Activated CD4-positive, alpha-beta T cell treated with anti-CD3 and anti-CD28 coated beads, Interleukin-2, amount 10 ng/mL, durations not matched to agents 7 days and 5 days (primary cell): ENCODE measurements at regions of chr17 and their contacts with region 1.

Region 1: GRCh38 chr17:63697341-63698286 is 2.3 kb downstream of the LIMD2 start:
- DNase-seq: peak; percentile 87
- H3K4me3 Mint-ChIP-seq: peak overlapping the region; percentile 97
- H3K27ac Mint-ChIP-seq: peak overlapping the region; percentile 98
- H3K4me1 Mint-ChIP-seq: peaks cover 43% of the 10 kb centered on the region
- H3K27me3 Mint-ChIP-seq: no peaks in the 10 kb centered on the region

Region 2: DNA sequence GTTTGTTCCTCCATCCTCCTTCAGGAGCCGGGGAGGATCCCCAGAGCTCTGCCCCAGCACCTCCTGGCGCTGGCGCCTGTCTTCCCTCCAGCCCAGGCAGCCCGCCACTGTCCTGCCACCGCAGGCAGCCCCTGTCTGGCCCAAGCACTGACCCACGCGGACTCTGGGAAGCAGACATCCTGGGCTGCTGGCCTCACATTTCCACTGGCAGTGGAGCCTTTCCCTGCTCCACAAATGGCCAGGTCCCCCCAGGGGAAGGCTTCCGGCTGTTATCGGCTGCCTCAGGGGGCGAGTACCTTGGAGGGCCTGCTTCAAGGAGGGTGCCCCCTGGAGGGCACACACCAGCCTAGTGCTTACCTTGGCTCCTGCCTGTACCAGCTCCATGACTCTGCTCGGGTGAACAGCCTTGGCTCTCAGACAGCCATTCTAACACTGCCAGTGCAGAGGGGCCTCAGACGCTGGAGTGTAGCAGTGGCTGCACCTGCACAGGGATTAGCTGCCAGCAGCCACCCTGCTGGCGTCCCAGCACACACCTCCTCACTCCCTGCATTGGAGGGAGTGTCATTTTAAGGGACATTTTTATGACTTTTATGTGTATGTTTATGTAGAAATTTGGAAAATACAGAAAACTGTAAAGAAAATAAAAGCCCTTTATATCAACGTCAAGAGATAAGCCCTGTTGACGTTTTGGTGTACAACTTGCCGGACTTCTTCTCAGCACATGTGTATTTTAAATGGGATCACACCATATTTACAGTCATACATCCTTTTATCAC is 199.7 kb before region 1 on chr17:
- CTCF ChIA-PET with region 1: no interaction called
- POLR2A ChIA-PET with region 1: no interaction called
- DNase-seq: no peak
- H3K4me3 Mint-ChIP-seq: no peak overlapping the region
- H3K27ac Mint-ChIP-seq: no peak overlapping the region
- H3K4me1 Mint-ChIP-seq: no peaks in the 10 kb centered on the region
- H3K27me3 Mint-ChIP-seq: peaks cover 9% of the 10 kb centered on the region

Region 3: GRCh38 chr17:63653050-63653449 is 44.6 kb before region 1 on chr17:
- CTCF ChIA-PET with region 1: no interaction called
- POLR2A ChIA-PET with region 1: no interaction called
- DNase-seq: no peak
- H3K4me3 Mint-ChIP-seq: no peak overlapping the region
- H3K27ac Mint-ChIP-seq: no peak overlapping the region
- H3K4me1 Mint-ChIP-seq: peaks cover 9% of the 10 kb centered on the region
- H3K27me3 Mint-ChIP-seq: no peaks in the 10 kb centered on the region

Region 4: DNA sequence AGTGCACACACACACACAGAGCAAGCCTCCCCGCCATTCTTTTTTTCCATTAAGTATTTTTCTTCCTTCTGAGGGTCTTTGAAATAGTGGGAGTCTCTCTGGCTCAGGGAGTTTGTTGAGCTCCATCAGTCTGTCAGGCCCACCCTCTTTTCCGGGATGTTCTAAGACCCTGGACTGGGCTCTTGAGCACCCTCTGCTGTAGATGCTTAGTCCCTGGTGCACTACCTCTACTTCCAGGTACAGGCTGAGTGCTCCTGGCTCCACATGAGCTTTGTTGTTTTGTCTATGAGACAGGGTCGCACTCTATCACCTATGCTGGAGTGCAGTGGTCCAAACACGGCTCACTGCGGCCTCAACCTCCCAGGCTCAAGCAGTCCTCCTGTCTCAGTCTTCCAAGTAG is 18.4 kb before region 1 on chr17:
- CTCF ChIA-PET with region 1: interaction called, 10 read pairs
- POLR2A ChIA-PET with region 1: no interaction called
- DNase-seq: no peak
- H3K4me3 Mint-ChIP-seq: no peak overlapping the region
- H3K27ac Mint-ChIP-seq: no peak overlapping the region
- H3K4me1 Mint-ChIP-seq: peaks cover 3% of the 10 kb centered on the region
- H3K27me3 Mint-ChIP-seq: no peaks in the 10 kb centered on the region

Region 5: DNA sequence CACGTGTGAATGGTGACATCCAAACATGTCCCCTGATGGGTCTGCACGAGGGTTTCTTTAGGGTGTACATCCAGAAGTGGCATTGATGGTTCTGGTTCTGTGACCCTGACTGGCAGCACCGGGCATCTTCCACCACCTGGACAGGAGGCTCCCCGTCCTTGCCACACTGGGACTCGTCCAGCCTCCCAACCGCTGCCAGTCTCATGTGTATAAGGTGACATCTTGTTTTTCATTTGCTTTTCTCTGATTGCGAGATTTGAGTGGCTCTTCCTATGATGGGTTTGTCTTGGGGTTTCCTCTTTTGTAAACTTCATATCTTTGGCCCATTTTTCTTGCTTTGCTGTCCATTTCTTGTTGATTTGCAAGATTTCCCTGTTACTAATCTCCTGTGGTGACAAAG is 11.5 kb after region 1 on chr17:
- CTCF ChIA-PET with region 1: interaction called, 21 read pairs
- POLR2A ChIA-PET with region 1: interaction called, 3 read pairs
- DNase-seq: no peak
- H3K4me3 Mint-ChIP-seq: no peak overlapping the region
- H3K27ac Mint-ChIP-seq: peak overlapping the region; percentile 36
- H3K4me1 Mint-ChIP-seq: peaks cover 61% of the 10 kb centered on the region
- H3K27me3 Mint-ChIP-seq: no peaks in the 10 kb centered on the region

Region 6: DNA sequence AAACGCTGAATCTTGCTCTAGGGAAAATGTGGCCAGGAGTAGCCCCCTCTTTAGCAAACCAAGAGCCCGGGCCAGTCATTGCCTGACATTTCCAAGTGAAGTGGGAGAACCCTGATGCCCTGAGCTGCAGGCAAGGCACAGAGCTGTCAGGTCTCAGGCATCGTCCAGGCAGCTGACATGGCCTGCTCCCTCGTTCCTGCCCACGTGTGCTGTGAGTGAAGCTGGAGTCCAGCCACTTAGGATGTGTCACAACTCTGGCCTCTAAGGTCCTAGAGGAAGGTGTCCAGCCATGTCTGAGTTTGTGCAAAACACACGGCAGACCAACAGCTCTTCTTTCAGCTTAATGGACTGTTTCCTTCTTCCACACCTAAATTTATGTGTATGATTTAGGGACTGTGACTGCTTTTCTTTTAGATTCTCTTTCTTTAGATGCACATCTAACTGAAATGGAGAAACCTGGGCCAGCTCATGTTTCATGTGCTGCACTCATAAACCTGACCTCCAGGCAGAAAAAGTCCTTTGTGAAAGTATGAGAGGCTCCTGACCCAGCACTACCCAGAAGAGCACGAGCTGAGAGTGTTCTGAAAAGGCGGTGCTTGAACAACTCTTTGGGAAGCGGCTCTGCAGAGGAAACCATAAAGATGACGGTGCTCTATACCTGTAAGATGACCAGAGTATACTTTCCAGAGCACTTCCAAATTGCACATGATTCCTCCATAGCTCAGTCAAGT is 17.1 kb after region 1 on chr17:
- CTCF ChIA-PET with region 1: interaction called, 21 read pairs
- POLR2A ChIA-PET with region 1: interaction called, 3 read pairs
- DNase-seq: no peak
- H3K4me3 Mint-ChIP-seq: no peak overlapping the region
- H3K27ac Mint-ChIP-seq: no peak overlapping the region
- H3K4me1 Mint-ChIP-seq: peaks cover 9% of the 10 kb centered on the region
- H3K27me3 Mint-ChIP-seq: no peaks in the 10 kb centered on the region